A673 (cell line): ENCODE measurements at regions of chr9 and their contacts with region 1.

Region 1: GRCh38 chr9:135156525-135157510 is 69.3 kb downstream of the OLFM1 start:
- DNase-seq: peak; percentile 92
- H3K4me3 ChIP-seq: peak overlapping the region; percentile 46
- H3K27ac ChIP-seq: peak overlapping the region; percentile 95
- H3K4me1 ChIP-seq: peaks cover 60% of the 10 kb centered on the region
- H3K27me3 ChIP-seq: no peaks in the 10 kb centered on the region
- CTCF ChIP-seq: no peak

Region 2: DNA sequence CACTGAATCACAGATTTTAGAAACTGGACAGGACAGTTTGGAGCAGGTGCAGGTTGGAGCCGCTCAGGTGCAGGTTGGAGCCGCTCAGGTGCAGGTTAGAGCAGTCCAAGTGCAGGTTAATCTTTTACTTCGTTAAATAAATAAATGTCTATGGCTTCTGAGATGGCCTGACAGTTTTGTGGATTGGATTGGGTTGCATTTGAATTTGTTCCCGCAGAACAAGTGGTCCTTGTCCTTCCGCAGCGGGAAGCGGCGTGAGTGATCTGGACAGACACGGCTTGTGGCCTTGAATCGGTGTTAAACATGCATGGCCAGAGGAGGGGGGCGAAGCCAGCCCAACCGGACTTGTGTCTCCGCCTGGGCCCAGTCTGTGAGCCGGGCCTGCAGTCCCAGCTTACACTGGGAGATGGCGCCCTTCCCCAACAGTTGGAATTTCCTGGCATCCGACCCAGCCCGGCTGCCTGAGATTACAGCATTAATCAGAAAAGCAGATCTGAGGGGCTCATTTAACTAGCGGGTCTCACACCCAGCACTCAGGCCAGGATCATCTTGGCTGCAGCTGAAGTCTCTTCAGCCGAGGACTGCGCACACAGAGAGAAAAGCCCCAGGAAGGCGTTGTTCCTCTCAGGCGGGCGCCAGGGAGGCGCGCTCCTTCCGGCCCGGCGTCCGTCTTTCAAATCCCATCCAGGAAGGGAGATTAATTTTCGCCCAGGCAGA is 70.8 kb before region 1 on chr9:
- CTCF ChIA-PET with region 1: interaction called, 5 read pairs
- POLR2A ChIA-PET with region 1: interaction called, 5 read pairs
- intact Hi-C with region 1: loop called (anchors 5 kb)
- DNase-seq: peak; percentile 92
- H3K4me3 ChIP-seq: peak overlapping the region; percentile 95
- H3K27ac ChIP-seq: peak overlapping the region; percentile 70
- H3K4me1 ChIP-seq: peaks cover 57% of the 10 kb centered on the region
- H3K27me3 ChIP-seq: no peaks in the 10 kb centered on the region
- CTCF ChIP-seq: peak; percentile 99